Esophagus muscularis mucosa (tissue), 4 donors: ENCODE measurements at regions of chr2 and their contacts with region 1.

Region 1: DNA sequence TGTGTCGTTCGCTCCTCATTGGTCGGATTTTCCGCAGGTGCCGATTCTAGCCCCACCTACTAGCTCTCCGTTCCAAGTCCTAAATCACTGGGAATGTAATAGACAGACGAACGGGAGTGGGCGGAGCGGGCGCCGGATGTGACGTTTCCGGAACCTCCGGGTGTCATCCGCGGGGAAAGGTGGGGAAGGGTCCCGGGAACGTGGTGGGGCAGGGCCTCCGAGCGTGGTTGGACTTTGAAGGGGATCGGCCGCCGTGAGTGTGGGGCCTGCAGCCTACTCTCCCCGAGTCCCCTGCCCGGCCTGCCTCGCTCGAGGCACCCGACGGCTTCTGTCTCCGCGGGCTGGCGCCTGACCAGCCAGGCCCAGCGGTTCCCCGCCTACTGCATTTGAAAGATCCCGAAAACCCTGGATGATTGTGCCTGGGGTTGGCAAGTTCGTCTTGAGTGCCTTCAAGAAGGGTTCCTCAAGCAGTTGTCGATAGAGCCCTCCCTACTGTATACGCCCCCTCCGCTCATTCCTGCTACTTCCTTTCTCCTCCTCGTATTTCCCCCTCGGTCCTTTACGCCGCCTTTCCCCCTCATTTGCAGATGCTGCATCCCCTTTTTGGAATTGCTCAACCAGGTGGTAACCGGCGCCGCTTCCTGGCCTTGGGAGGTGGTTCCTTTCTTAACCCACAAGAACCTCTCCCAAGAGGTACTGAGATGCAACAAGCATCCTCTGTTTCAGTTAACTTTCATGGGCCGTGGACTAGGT is at the start of gene STAMBP:
- DNase-seq: peak; percentile 99
- H3K4me3 ChIP-seq: peak within 1 kb of the TSS; percentile 69 to 87 (median 82)
- H3K27ac ChIP-seq: peak within 1 kb of the TSS; percentile 93 to 98 (median 96)
- H3K4me1 ChIP-seq: peaks cover 9 to 64% (median 59%) of the 10 kb centered on the region in 4 donors
- H3K27me3 ChIP-seq: no peaks in the 10 kb centered on the region
- CTCF ChIP-seq: no peak
- EP300 ChIP-seq: no peak
- POLR2A ChIP-seq: peak; percentile 76
- total RNA-seq, gene STAMBP: 32.3 to 73.8 (median 34.1) TPM

Region 2: GRCh38 chr2:73985308-73986084 is 156.5 kb after region 1 on chr2:
- intact Hi-C with region 1: loop called (anchors 10 kb)
- DNase-seq: no peak
- H3K4me3 ChIP-seq: peak overlapping the region; percentile 59 to 76 (median 66)
- H3K27ac ChIP-seq: peak overlapping the region; percentile 52 to 71 (median 64)
- H3K4me1 ChIP-seq: peaks cover 58 to 66% (median 65%) of the 10 kb centered on the region in 4 donors
- H3K27me3 ChIP-seq: no peaks in the 10 kb centered on the region
- CTCF ChIP-seq: no peak
- EP300 ChIP-seq: no peak
- POLR2A ChIP-seq: peak; percentile 19

Region 3: DNA sequence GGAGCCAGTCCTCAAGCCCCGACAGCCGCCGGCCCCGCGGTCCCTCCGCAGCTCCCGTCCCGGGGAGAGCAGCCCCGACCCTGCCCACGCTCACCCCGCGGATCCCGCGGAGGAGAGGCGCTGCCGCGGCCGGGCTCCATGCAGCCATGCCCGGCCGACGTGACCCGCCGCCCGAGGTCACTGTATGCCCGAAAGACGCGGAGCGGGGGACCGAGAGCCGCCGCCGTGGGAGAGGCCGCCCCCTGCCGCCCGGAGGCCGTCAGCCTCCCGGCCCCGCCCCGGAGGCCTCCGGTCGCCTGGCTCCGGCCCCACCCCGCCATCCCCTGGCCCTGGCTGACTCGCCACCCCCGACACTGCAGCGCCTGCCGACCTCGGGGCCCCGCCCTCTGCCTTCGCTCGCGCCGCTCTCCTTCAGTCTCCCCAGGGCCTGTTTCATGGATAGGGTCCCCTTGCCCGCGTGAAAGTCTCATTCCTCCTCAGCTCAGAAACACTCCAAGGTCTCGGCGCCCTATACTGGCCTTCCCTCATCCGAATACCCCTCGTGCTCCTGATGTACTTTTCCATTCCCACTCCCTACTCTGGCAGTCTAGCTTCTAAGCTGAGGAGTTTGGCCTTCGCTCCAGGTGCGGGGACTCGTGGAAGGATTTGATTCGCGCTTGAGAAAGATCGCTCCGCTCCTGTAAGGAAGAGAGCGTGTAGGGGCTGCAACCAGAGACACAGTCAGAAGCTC is 318.9 kb after region 1 on chr2 and contains the start of gene BOLA3:
- intact Hi-C with region 1: loop called (anchors 10 kb)
- DNase-seq: peak; percentile 93
- H3K4me3 ChIP-seq: peak within 1 kb of the TSS; percentile 86 to 89 (median 87)
- H3K27ac ChIP-seq: peak within 1 kb of the TSS; percentile 80 to 83 (median 80)
- H3K4me1 ChIP-seq: peaks cover 15 to 41% (median 24%) of the 10 kb centered on the region in 4 donors
- H3K27me3 ChIP-seq: no peaks in the 10 kb centered on the region
- CTCF ChIP-seq: peak; percentile 77 to 88 (median 77)
- EP300 ChIP-seq: no peak
- POLR2A ChIP-seq: no peak
- total RNA-seq, gene BOLA3: 29.4 to 46.9 (median 42.8) TPM

Region 4: DNA sequence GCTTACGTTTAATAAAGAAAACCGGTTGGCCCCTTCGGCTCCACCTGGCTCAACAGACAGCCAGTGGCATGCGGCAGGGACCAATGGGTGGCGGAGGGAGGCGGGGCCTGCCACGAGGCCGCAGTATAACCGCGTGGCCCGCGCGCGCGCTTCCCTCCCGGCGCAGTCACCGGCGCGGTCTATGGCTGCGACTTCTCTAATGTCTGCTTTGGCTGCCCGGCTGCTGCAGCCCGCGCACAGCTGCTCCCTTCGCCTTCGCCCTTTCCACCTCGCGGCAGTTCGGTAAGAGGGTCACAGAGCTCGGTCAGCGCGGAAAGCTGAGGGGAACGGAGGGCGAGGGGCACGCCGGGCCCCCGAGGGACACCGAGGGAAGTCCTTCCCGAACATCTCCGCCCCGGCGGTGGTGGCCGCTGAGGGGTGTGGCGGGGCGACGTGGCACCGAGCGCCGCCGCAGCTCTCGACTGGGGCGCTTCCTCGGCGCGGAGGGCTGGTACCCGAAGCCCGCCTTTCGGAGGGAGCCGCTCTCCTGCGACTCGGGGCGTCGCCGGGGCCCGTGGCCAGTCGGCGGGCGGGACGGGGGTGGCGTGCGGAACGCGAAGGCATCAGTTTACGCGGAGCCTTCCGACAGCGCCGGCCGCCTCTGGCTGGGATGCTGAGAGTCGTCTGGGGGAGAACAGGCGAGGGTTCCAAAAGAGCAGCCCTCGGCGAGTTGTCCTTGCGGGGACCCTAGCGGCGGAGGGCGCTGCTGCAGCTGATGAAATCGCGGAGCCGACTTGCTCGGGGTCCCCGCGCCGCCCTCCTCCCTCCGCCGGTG is 369.7 kb after region 1 on chr2 and contains the start of gene MTHFD2:
- intact Hi-C with region 1: no loop called
- DNase-seq: peak; percentile 96
- H3K4me3 ChIP-seq: peak within 1 kb of the TSS; percentile 68 to 88 (median 72)
- H3K27ac ChIP-seq: peak within 1 kb of the TSS; percentile 86 to 98 (median 89)
- H3K4me1 ChIP-seq: peaks cover 7 to 34% (median 33%) of the 10 kb centered on the region in 4 donors
- H3K27me3 ChIP-seq: no peaks in the 10 kb centered on the region
- CTCF ChIP-seq: peak; percentile 61 to 83 (median 65)
- EP300 ChIP-seq: no peak
- POLR2A ChIP-seq: peak; percentile 50
- total RNA-seq, gene MTHFD2: 22.0 to 80.8 (median 43.5) TPM

Region 5: GRCh38 chr2:75276093-75277055 is 1447.4 kb after region 1 on chr2:
- intact Hi-C with region 1: no loop called
- DNase-seq: no peak
- H3K4me3 ChIP-seq: no peak overlapping the region
- H3K27ac ChIP-seq: no peak overlapping the region
- H3K4me1 ChIP-seq: no peaks in the 10 kb centered on the region
- H3K27me3 ChIP-seq: no peaks in the 10 kb centered on the region
- CTCF ChIP-seq: no peak
- EP300 ChIP-seq: no peak
- POLR2A ChIP-seq: no peak